ENCODE measurements at regions of chr6 and their contacts with region 1.

Region 1: GRCh38 chr6:89242574-89243330 is 25.6 kb upstream of the GABRR1 start:
- DNase-seq: no peak
- H3K4me3 ChIP-seq: no peak overlapping the region
- CTCF ChIP-seq: peak in 1 of 3 donors; percentile 65
- POLR2A ChIP-seq: no peak

Region 2: GRCh38 chr6:88982720-88983119 is 260.0 kb before region 1 on chr6:
- intact Hi-C with region 1: loop called (anchors 5 kb)
- DNase-seq: peak in 1 of 2 donors; percentile 73
- H3K4me3 ChIP-seq: no peak overlapping the region
- CTCF ChIP-seq: no peak
- POLR2A ChIP-seq: no peak